BJ (cell line): ENCODE measurements at regions of chr1 and their contacts with region 1.

Region 1: GRCh38 chr1:111733183-111733991 is 5.8 kb downstream of the INKA2 start:
- DNase-seq: no peak
- H3K4me3 ChIP-seq: no peak overlapping the region
- H3K27me3 ChIP-seq: no peaks in the 10 kb centered on the region
- CTCF ChIP-seq: no peak

Region 2: GRCh38 chr1:111792249-111792648 is 58.9 kb after region 1 on chr1:
- CTCF ChIA-PET with region 1: no interaction called
- POLR2A ChIA-PET with region 1: no interaction called
- DNase-seq: no peak
- H3K4me3 ChIP-seq: no peak overlapping the region
- H3K27me3 ChIP-seq: peaks cover 4% of the 10 kb centered on the region
- CTCF ChIP-seq: no peak

Region 3: DNA sequence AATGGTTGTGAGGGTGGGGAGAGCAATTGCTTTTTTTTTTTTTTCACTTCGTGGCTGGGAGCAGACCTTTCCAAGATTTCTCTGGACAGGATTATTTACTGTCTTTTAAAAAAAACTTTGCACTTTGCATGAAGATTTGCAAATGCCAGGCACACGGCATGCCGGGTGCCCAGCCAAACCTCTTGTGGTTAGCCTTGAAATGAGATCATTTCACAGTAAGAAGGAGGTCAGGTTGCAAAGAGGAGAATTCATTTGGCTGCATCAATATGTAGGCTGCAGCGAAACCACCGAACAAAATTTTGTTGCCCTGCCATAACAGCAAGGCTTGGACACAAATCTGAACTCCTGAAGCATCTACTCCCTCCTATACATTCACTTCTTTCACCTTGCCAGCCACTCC is 292.6 kb after region 1 on chr1:
- CTCF ChIA-PET with region 1: no interaction called
- POLR2A ChIA-PET with region 1: no interaction called
- DNase-seq: no peak
- H3K4me3 ChIP-seq: no peak overlapping the region
- H3K27me3 ChIP-seq: no peaks in the 10 kb centered on the region
- CTCF ChIP-seq: no peak

Region 4: DNA sequence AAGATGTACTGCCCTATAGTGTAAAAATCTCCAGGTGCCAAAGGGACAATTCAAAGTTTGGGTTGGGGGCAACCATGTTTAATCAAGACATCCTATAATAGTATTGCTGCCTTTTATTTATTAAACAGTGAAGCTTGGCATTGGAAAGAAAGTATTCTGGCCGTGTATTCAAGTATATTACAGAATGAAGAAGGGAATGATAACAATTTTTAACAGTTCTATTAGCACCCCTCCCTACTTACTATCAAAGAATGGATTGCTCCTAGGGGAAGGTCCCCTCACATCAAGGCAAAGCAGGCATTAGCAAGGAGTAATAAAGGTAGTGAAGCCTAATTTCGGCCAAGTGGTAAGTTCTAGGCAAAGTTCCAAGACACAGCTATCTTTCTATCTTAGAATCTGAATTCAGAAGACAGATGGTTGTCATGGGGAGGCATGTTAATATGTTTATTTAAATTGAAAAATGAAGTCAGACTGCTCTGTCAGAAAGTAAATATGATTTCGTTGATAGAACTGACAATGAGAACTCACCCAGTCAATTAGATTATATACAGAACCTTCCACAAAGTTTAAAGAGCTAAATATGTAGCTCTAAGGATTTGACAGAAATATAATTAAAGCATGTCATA is 861.0 kb after region 1 on chr1:
- CTCF ChIA-PET with region 1: no interaction called
- POLR2A ChIA-PET with region 1: interaction called, 15 read pairs
- DNase-seq: no peak
- H3K4me3 ChIP-seq: no peak overlapping the region
- H3K27me3 ChIP-seq: no peaks in the 10 kb centered on the region
- CTCF ChIP-seq: no peak